HEK293 (cell line): ENCODE measurements at regions of chr17 and their contacts with region 1.

Region 1: DNA sequence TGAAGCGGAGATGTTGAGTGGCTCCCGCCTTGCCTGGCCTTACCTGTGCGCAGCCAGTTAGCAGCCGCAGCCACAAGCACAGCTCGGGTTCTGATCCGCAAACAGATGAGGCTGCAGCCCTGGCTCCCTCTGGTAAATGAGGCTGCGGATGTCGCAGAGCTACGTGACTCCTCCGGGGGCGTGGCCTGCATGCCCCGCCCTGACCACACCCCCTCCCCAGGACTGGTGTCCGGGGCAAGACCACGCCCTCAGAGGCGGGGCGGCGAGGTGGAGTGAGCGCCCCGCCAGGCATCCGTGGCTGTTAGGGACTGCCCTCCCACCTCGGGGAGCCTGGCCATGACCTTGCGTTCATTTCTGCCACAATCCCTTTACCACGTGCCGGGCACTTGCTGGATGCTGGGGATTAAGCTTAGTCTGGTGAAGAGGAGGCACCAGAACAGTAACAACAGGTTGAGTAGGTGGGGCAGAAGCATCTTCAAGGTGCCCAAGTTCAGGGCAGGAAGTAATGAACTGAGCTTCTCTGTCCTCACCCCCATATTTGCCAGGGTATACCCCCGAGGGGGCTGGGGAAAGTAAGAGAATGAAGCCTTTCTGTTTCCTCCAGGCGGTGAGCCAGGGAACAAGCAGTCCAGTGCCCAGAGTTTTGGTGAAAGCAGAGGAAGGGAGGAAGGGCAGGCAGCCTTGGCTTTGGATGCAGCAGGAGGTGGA is at the start of gene ALDOC:
- H3K4me3 ChIP-seq: no peak within 1 kb of the TSS
- H3K27ac ChIP-seq: no peak within 1 kb of the TSS
- H3K4me1 ChIP-seq: peaks cover 2% of the 10 kb centered on the region; the same call in 1 of the 2 replicates
- CTCF ChIP-seq: no peak

Region 2: GRCh38 chr17:28318759-28319660 is 257.9 kb before region 1 on chr17 and contains the start of gene TMEM97:
- CTCF ChIA-PET with region 1: no interaction called
- POLR2A ChIA-PET with region 1: no interaction called
- H3K4me3 ChIP-seq: peak within 1 kb of the TSS; percentile 69
- H3K27ac ChIP-seq: peak within 1 kb of the TSS; percentile 88
- H3K4me1 ChIP-seq: peaks cover 10% of the 10 kb centered on the region
- CTCF ChIP-seq: peak; percentile 88

Region 3: GRCh38 chr17:28592260-28592659 is 15.3 kb after region 1 on chr17:
- CTCF ChIA-PET with region 1: interaction called, 5 read pairs
- POLR2A ChIA-PET with region 1: interaction called, 30 read pairs
- H3K4me3 ChIP-seq: no peak overlapping the region
- H3K27ac ChIP-seq: no peak overlapping the region
- H3K4me1 ChIP-seq: no peaks in the 10 kb centered on the region
- CTCF ChIP-seq: no peak

Region 4: GRCh38 chr17:28598799-28599310 is 21.9 kb after region 1 on chr17 and contains the start of gene SPAG5:
- CTCF ChIA-PET with region 1: interaction called, 4 read pairs
- POLR2A ChIA-PET with region 1: interaction called, 30 read pairs
- H3K4me3 ChIP-seq: peak within 1 kb of the TSS; percentile 87
- H3K27ac ChIP-seq: peak within 1 kb of the TSS; percentile 90
- H3K4me1 ChIP-seq: no peaks in the 10 kb centered on the region
- CTCF ChIP-seq: no peak